Head of caudate nucleus (tissue), 42 donors: ENCODE measurements at regions of chr9 and their contacts with region 1.

Region 1: GRCh38 chr9:122350638-122351355 is 20.0 kb upstream of the PTGS1 start:
- DNase-seq: peak; percentile 63 to 95 (median 89)

Region 2: GRCh38 chr9:122099271-122099869 is 251.4 kb before region 1 on chr9:
- intact Hi-C with region 1: loop called (anchors 2 kb)
- DNase-seq: peak; percentile 62 to 95 (median 88)

Region 3: GRCh38 chr9:122125158-122125508 is 225.7 kb before region 1 on chr9:
- intact Hi-C with region 1: loop called (anchors 2 kb)
- DNase-seq: peak; percentile 80 to 95 (median 91)

Region 4: DNA sequence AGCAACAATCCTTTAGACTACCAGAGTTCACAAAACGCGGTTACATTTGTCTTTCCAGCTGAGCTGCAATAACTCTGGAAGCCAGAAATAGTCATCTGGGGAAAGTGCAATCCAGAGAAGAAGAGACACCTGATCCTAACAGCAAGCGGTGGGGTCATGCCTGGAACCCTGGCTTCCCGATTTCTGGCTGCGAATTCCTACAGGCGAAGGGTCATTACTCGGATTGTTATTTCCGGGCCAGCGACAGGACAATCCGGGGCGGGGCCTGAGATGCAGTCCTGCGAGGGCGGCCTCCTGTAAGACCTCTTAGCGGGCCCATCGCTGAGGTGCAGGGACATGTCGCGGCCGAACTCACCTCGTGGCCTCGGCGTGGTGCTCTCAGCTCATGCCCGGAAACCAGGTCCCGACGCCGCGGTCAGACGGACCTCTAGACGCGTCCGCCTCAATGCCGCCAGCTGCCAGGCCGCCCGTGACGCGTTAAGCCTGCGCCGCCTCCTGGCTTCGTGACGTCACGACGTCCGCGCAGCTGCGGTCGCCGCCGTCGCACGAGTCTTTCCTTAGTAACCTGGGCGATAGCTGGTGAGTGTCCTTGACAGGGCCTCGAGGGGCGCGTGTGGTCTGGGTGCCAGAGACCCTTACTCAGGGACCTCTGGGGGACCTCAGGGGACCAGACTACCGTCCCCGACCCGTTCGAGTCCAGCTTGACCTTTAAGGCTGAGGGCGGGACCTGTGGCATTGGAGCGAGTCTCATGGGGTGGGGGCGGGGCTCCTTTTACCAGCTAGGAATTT is 86.2 kb before region 1 on chr9 and contains the starts of genes MRRF and RBM18:
- intact Hi-C with region 1: loop called (anchors 10 kb)
- DNase-seq: peak; percentile 83 to 95 (median 90)

Region 5: DNA sequence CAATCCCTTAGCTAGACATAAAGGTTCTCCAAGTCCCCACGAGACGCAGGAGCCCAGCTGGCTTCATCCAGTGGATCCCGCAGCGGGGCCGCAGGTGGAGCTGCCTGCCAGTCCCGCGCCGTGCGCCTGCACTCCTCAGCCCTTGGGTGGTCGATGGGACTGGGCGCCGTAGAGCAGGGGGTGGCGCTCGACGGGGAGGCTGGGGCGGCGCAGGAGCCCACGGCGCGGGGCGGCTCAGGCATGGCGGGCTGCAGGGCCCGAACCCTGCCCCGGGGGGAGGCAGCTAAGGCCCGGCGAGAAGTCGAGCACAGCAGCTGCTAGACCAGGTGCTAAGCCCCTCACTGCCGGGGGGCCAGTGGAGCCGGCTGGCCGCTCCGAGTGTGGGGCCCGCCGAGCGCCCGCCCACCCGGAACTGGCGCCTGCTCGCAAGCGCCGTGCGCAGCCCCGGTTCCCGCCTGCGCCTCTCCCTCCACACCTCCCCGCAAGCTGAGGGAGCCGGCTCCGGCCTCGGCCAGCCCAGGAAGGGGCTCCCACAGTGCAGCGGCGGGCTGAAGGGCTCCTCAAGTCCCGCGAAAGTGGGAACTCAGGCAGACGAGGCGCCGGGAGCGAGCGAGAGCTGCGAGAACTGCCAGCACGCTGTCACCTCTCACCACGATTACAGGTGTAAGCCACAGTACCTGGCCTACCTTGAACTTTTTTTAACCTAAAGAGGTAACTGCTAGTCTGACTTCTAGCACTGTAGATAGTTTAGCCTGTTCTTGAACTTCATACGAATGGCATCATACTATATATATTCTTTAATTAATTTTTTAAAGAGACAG is 55.5 kb after region 1 on chr9:
- intact Hi-C with region 1: no loop called
- DNase-seq: no peak